A549 (cell line): ENCODE measurements at regions of chr19 and their contacts with region 1.

Region 1: DNA sequence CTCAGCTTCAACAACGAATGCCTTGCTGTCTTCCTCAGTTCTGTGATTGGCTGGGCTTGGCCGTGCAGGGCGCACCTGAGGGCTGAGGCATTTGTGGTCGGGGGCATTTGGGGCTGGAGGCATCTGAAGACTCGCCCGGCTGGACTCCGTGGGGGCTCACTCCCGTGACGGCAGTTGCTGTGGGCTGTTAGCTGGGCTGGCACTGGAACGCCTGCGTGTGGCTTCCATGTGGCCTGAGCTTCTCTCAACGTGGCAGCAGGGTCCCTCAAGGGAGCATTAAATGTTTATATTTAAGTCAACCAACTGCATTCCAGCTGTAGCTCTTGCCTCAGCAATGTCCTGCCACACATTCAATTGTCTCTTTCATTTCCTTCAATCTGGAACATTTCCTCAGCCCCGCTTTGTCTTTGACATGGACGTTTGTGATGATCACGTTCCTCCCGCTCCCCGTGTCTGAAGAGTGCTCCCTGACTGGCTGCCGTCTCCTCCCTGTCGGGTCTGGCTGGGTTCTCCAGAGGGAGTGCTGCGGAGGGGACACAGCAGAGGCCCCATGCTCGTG is 21.0 kb downstream of the CCDC8 start:
- DNase-seq: no peak
- ATAC-seq: no peak
- H3K4me3 ChIP-seq: no peak overlapping the region
- H3K27ac ChIP-seq: no peak overlapping the region
- H3K4me1 ChIP-seq: no peaks in the 10 kb centered on the region
- CTCF ChIP-seq: no peak
- EP300 ChIP-seq: no peak
- POLR2A ChIP-seq: no peak
- RAD21 ChIP-seq: no peak

Region 2: DNA sequence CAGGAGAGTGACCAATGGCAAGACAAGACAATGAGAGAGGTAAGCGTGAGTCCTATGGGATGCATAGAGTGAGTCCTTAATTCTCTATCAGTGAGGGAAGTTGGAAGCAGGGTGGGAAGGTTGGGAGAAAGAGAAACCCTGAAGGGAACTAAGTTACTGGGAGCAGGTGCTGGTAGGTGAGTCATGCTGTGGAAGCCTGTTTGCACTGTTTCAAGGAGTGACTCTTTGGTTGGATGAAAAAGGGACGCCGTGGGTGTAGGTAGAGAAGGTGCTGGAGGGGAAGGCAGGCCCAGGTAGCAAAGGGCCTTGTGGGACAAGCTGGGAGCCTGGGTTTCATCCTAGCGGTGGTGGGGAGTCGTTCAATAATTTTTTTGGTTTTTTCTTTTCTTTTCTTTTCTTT is 140.9 kb before region 1 on chr19:
- CTCF ChIA-PET with region 1: no interaction called
- POLR2A ChIA-PET with region 1: no interaction called
- DNase-seq: no peak
- ATAC-seq: no peak
- H3K4me3 ChIP-seq: no peak overlapping the region
- H3K27ac ChIP-seq: no peak overlapping the region
- H3K4me1 ChIP-seq: no peaks in the 10 kb centered on the region
- CTCF ChIP-seq: no peak
- EP300 ChIP-seq: no peak
- POLR2A ChIP-seq: no peak
- RAD21 ChIP-seq: no peak

Region 3: GRCh38 chr19:46337487-46337886 is 54.8 kb before region 1 on chr19:
- CTCF ChIA-PET with region 1: interaction called, 10 read pairs
- POLR2A ChIA-PET with region 1: interaction called, 3 read pairs
- DNase-seq: no peak
- ATAC-seq: no peak
- H3K4me3 ChIP-seq: no peak overlapping the region
- H3K27ac ChIP-seq: no peak overlapping the region
- H3K4me1 ChIP-seq: no peaks in the 10 kb centered on the region
- CTCF ChIP-seq: no peak
- EP300 ChIP-seq: no peak
- POLR2A ChIP-seq: no peak
- RAD21 ChIP-seq: no peak

Region 4: DNA sequence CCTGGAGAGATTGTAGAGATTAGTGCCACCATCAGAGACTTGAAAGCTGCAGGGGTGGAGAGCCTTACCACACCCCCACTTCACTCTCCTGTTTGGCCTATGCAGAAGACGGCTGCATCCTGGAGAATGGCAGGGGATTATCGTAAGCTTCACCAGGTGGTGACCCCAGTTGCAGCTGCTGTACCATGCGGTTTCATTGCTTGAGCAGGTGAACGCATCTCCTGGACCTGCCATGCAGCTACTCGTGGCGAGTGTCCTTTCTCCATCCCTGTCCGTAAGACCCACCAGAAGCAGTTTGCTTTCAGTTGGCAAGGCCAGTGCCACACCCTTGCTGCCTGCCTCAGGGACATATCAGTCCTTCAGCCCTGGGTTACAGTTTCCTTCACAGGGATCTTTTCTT is 24.2 kb before region 1 on chr19:
- CTCF ChIA-PET with region 1: interaction called, 501 read pairs
- POLR2A ChIA-PET with region 1: interaction called, 3 read pairs
- DNase-seq: no peak
- ATAC-seq: no peak
- H3K4me3 ChIP-seq: no peak overlapping the region
- H3K27ac ChIP-seq: no peak overlapping the region
- H3K4me1 ChIP-seq: peaks cover 22% of the 10 kb centered on the region
- CTCF ChIP-seq: no peak
- EP300 ChIP-seq: no peak
- POLR2A ChIP-seq: no peak
- RAD21 ChIP-seq: no peak

Region 5: DNA sequence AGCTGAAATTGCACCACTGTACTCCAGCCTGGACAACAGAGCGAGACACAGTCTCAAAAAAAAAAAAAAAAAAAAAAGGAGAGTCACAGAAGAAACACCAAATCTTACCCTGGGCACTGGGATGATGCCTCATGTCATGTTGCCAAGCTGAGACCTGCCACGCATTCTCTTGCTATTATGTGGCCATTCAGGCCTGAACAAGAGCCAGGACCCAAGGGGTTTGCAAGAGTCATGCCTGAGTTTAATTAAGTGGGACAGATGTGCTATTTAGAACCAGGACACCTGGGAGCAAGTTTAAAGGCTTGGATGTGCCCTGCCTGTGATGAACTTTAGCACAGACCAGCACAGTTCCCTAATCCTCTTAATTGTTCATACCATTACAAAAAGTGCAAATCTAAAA is 69.2 kb after region 1 on chr19:
- CTCF ChIA-PET with region 1: interaction called, 19 read pairs
- POLR2A ChIA-PET with region 1: no interaction called
- DNase-seq: no peak
- ATAC-seq: no peak
- H3K4me3 ChIP-seq: no peak overlapping the region
- H3K27ac ChIP-seq: no peak overlapping the region
- H3K4me1 ChIP-seq: peaks cover 8% of the 10 kb centered on the region; the same call in 2 of the 3 replicates
- CTCF ChIP-seq: no peak
- EP300 ChIP-seq: no peak
- POLR2A ChIP-seq: no peak
- RAD21 ChIP-seq: no peak

Region 6: DNA sequence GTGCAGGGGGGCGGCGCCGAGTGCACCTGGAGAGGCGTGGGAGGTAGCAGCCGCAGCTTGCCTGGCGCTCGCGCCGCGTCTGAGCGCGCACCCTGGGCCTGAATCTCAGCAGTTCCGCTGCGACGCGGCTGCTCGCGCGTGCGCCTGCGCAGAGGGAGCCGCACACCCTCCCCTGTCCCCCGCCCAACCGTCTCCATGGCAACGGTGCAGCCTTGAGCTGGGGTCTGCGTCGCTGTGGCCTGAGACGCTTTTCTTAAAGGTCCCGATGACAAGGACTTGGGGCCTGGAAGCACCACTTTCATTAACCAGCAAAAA is 103.4 kb after region 1 on chr19 and contains the start of gene PNMA8B:
- CTCF ChIA-PET with region 1: interaction called, 49 read pairs
- POLR2A ChIA-PET with region 1: no interaction called
- DNase-seq: no peak
- ATAC-seq: no peak
- H3K4me3 ChIP-seq: no peak within 1 kb of the TSS
- H3K27ac ChIP-seq: no peak within 1 kb of the TSS
- H3K4me1 ChIP-seq: peaks cover 5% of the 10 kb centered on the region; the same call in 1 of the 3 replicates
- CTCF ChIP-seq: no peak
- EP300 ChIP-seq: no peak
- POLR2A ChIP-seq: no peak
- RAD21 ChIP-seq: no peak
- polyA plus RNA-seq, gene PNMA8B: not detected in 2 replicates

Region 7: DNA sequence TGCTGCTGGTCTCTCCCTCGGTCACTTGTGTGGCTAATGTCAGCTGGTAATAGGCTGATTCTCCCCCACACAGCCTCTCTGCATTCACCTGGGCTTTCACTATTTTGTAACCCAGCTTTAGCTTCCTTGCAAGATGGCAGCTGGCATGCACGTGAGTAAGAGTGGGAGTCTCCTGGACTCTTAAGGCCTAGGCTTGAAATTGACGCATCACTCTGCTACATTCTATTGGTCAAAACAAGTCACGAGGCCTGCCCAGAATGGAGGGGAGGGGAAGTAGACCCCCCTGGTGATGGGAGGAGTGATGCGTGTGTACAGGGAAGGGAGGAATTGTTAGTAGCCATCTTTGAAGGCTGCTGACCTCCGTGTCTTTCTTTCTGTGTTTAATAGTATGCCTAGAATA is 128.3 kb after region 1 on chr19:
- CTCF ChIA-PET with region 1: interaction called, 101 read pairs
- POLR2A ChIA-PET with region 1: no interaction called
- DNase-seq: no peak
- ATAC-seq: no peak
- H3K4me3 ChIP-seq: no peak overlapping the region
- H3K27ac ChIP-seq: no peak overlapping the region
- H3K4me1 ChIP-seq: no peaks in the 10 kb centered on the region
- CTCF ChIP-seq: no peak
- EP300 ChIP-seq: no peak
- POLR2A ChIP-seq: no peak
- RAD21 ChIP-seq: no peak

Region 8: GRCh38 chr19:46555628-46556280 is 163.4 kb after region 1 on chr19:
- CTCF ChIA-PET with region 1: no interaction called
- POLR2A ChIA-PET with region 1: no interaction called
- DNase-seq: no peak
- ATAC-seq: no peak
- H3K4me3 ChIP-seq: no peak overlapping the region
- H3K27ac ChIP-seq: no peak overlapping the region
- H3K4me1 ChIP-seq: no peaks in the 10 kb centered on the region
- CTCF ChIP-seq: no peak
- EP300 ChIP-seq: no peak
- POLR2A ChIP-seq: no peak
- RAD21 ChIP-seq: no peak

Region 9: GRCh38 chr19:46571531-46571930 is 179.2 kb after region 1 on chr19:
- CTCF ChIA-PET with region 1: no interaction called
- POLR2A ChIA-PET with region 1: no interaction called
- DNase-seq: peak; percentile 75 to 79
- ATAC-seq: peak; percentile 92 to 95
- H3K4me3 ChIP-seq: no peak overlapping the region
- H3K27ac ChIP-seq: no peak overlapping the region
- H3K4me1 ChIP-seq: no peaks in the 10 kb centered on the region
- CTCF ChIP-seq: 0 out of 3 replicates have a peak, but pooled peaks have one; percentile 7
- EP300 ChIP-seq: no peak
- POLR2A ChIP-seq: no peak
- RAD21 ChIP-seq: no peak; a peak in 1 of 5 replicates

Region 10: GRCh38 chr19:47124937-47125668 is 732.8 kb after region 1 on chr19:
- CTCF ChIA-PET with region 1: no interaction called
- POLR2A ChIA-PET with region 1: no interaction called
- DNase-seq: peak; percentile 86 to 90
- ATAC-seq: peak; percentile 84 to 85
- H3K4me3 ChIP-seq: no peak overlapping the region
- H3K27ac ChIP-seq: peak overlapping the region in 1 of 2 experiments; percentile 51; a peak in 3 of 6 replicates
- H3K4me1 ChIP-seq: peaks cover 33% of the 10 kb centered on the region
- CTCF ChIP-seq: peak; percentile 95
- EP300 ChIP-seq: no peak
- POLR2A ChIP-seq: no peak
- RAD21 ChIP-seq: peak; percentile 91 to 95